Right ventricle myocardium inferior (tissue), 1 donor: ENCODE measurements at regions of chr1 and their contacts with region 1.

Region 1: GRCh38 chr1:203823306-203823705 is 27.9 kb downstream of the ZBED6 start:
- DNase-seq: no peak
- ATAC-seq: no peak

Region 2: GRCh38 chr1:203711251-203712007 is 111.9 kb before region 1 on chr1:
- intact Hi-C with region 1: loop called (anchors 10 kb)
- DNase-seq: no peak
- ATAC-seq: peak; percentile 58

Region 3: DNA sequence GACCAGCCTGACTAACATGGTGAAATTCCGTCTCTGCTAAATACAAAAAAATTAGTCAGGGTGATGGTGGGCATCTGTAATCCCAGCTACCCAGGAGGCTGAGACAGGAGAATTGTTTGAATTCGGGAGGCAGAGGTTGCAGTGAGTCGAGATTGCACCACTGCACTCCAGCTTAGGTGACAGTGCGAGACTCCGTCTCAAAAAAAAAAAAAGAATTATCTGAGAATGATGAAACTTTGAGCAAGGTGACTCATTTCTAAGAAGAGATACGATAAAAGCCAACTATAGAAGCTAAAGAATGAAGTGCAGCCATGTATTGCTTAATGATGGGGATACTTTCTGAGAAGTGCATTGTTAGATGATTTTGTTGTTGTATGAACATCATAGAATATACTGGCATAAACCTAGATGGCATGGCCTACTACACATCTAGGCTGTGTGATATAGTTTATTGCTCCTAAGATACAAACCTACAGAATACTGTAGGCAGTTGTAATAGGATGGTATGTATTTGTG is 102.8 kb after region 1 on chr1:
- intact Hi-C with region 1: no loop called
- DNase-seq: no peak
- ATAC-seq: no peak